BJ (cell line): ENCODE measurements at regions of chr5 and their contacts with region 1.

Region 1: GRCh38 chr5:154520861-154521453 is 42.9 kb upstream of the HAND1 start:
- DNase-seq: no peak
- H3K4me3 ChIP-seq: no peak overlapping the region
- H3K27me3 ChIP-seq: peaks cover 4% of the 10 kb centered on the region
- CTCF ChIP-seq: peak; percentile 82

Region 2: GRCh38 chr5:154395407-154396258 is 125.3 kb before region 1 on chr5:
- CTCF ChIA-PET with region 1: no interaction called
- POLR2A ChIA-PET with region 1: no interaction called
- DNase-seq: no peak
- H3K4me3 ChIP-seq: no peak overlapping the region
- H3K27me3 ChIP-seq: no peaks in the 10 kb centered on the region
- CTCF ChIP-seq: no peak

Region 3: DNA sequence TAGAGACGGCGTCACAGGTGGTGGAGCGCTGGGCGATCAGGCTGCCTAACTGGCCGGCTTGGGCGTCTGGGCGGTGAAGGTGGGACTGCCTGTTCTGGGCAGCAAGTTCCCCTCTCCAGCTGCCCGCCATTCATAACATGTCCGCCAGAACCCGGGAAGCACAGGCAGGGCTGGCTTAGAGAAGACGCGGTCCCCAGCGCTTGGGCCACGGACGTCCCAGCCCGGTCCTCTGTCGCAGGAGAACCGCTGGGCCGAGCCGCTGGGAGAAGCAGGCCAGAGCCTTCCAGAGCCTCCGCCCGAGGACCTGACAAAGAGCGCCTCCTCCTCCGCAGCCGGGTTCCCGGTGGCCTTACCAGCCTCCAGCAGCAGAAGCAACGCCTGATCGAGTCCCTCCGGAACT is 27.7 kb before region 1 on chr5:
- CTCF ChIA-PET with region 1: interaction called, 19 read pairs
- POLR2A ChIA-PET with region 1: no interaction called
- DNase-seq: no peak
- H3K4me3 ChIP-seq: no peak overlapping the region
- H3K27me3 ChIP-seq: peaks cover 12% of the 10 kb centered on the region
- CTCF ChIP-seq: no peak

Region 4: DNA sequence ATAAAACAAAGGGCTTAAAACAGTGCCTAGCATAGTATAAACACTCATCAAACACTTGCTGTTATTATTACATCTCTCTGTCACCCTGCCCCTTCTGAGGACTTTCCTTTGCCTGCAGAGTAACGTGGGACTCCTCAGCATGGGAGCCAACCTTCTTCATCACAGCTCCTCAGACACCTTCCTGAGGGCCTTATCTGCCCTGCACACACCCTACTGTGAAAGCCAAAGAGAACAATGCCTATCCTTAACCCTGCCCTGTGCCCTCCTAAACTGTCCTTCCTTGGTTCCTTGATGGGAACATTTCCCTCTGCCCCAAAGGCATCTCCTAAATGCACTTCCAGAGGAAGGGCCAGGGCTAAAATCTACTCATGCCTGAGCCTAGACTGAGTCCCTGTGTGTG is 22.4 kb before region 1 on chr5:
- CTCF ChIA-PET with region 1: interaction called, 24 read pairs
- POLR2A ChIA-PET with region 1: no interaction called
- DNase-seq: no peak
- H3K4me3 ChIP-seq: no peak overlapping the region
- H3K27me3 ChIP-seq: peaks cover 12% of the 10 kb centered on the region
- CTCF ChIP-seq: no peak

Region 5: GRCh38 chr5:154505611-154506010 is 15.3 kb before region 1 on chr5:
- CTCF ChIA-PET with region 1: interaction called, 35 read pairs
- POLR2A ChIA-PET with region 1: no interaction called
- DNase-seq: no peak
- H3K4me3 ChIP-seq: no peak overlapping the region
- H3K27me3 ChIP-seq: peaks cover 8% of the 10 kb centered on the region
- CTCF ChIP-seq: no peak

Region 6: DNA sequence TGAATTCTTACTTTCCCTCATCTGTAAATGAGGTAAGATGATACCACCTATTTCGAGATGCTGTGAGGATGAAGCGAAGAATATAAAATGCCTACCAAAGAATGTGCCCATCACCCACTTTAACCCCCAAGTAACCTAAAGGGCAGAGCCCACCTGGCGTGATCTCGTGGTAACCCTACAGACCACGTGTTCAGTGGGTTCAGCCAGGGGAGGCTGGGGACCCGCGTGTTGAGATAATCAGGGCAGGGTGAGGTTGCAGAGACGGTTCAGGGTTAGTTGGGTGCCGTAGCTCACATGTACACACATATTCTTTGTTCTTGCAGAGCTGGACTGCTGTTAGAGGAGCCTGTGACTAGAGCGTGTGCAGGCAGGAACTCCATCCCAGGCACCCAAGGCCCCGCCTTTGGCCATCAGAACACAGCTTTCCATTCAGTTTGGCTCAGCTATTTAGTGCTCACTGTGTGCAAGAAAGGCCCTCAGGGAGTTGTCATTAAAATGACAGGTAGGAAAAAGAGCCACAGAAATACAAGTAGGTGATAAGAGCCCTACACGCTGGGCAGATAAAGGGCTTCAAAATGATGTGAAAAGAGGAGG is 13.6 kb after region 1 on chr5:
- CTCF ChIA-PET with region 1: interaction called, 21 read pairs
- POLR2A ChIA-PET with region 1: no interaction called
- DNase-seq: no peak
- H3K4me3 ChIP-seq: no peak overlapping the region
- H3K27me3 ChIP-seq: peaks cover 4% of the 10 kb centered on the region
- CTCF ChIP-seq: no peak

Region 7: GRCh38 chr5:154610321-154611154 is 89.6 kb after region 1 on chr5:
- CTCF ChIA-PET with region 1: interaction called, 22 read pairs
- POLR2A ChIA-PET with region 1: no interaction called
- DNase-seq: no peak
- H3K4me3 ChIP-seq: peak overlapping the region; percentile 27
- H3K27me3 ChIP-seq: peaks cover 15% of the 10 kb centered on the region
- CTCF ChIP-seq: peak; percentile 94

Region 8: GRCh38 chr5:154683101-154683880 is 162.3 kb after region 1 on chr5:
- CTCF ChIA-PET with region 1: no interaction called
- POLR2A ChIA-PET with region 1: no interaction called
- DNase-seq: no peak
- H3K4me3 ChIP-seq: peak overlapping the region; percentile 58
- H3K27me3 ChIP-seq: no peaks in the 10 kb centered on the region
- CTCF ChIP-seq: no peak

Region 9: GRCh38 chr5:154995679-154996078 is 474.7 kb after region 1 on chr5:
- CTCF ChIA-PET with region 1: no interaction called
- POLR2A ChIA-PET with region 1: no interaction called
- DNase-seq: no peak
- H3K4me3 ChIP-seq: no peak overlapping the region
- H3K27me3 ChIP-seq: no peaks in the 10 kb centered on the region
- CTCF ChIP-seq: no peak